CD4-positive, alpha-beta memory T cell (primary cell): ENCODE measurements at regions of chr11 and their contacts with region 1.

Region 1: GRCh38 chr11:117817368-117818040 is 7.0 kb downstream of the FXYD2 start:
- DNase-seq: peak; percentile 75 to 82 (median 79)
- H3K4me3 ChIP-seq: no peak overlapping the region
- H3K4me3 Mint-ChIP-seq: peak overlapping the region in 5 of 8 donors; percentile 43 to 74 (median 61)
- H3K27ac ChIP-seq: peak overlapping the region; percentile 74
- H3K27ac Mint-ChIP-seq: peak overlapping the region; percentile 80 to 94 (median 93)
- H3K4me1 ChIP-seq: peaks cover 52% of the 10 kb centered on the region
- H3K4me1 Mint-ChIP-seq: peaks cover 26 to 69% (median 45%) of the 10 kb centered on the region in 4 donors
- H3K27me3 ChIP-seq: no peaks in the 10 kb centered on the region
- H3K27me3 Mint-ChIP-seq: no peaks in the 10 kb centered on the region

Region 2: GRCh38 chr11:117426269-117426685 is 391.2 kb before region 1 on chr11:
- CTCF ChIA-PET with region 1: interaction called, 51 read pairs
- POLR2A ChIA-PET with region 1: no interaction called
- intact Hi-C with region 1: loop called (anchors 1 kb)
- DNase-seq: peak in 4 of 5 donors; percentile 42 to 59 (median 52)
- H3K4me3 ChIP-seq: no peak overlapping the region
- H3K4me3 Mint-ChIP-seq: peak overlapping the region in 4 of 8 donors; percentile 6 to 60 (median 36)
- H3K27ac ChIP-seq: no peak overlapping the region
- H3K27ac Mint-ChIP-seq: no peak overlapping the region
- H3K4me1 ChIP-seq: peaks cover 6% of the 10 kb centered on the region
- H3K4me1 Mint-ChIP-seq: peaks cover 0 to 13% (median under 1%) of the 10 kb centered on the region in 4 donors
- H3K27me3 ChIP-seq: no peaks in the 10 kb centered on the region
- H3K27me3 Mint-ChIP-seq: peaks cover 0 to 1% of the 10 kb centered on the region in 2 donors

Region 3: GRCh38 chr11:117570701-117571100 is 246.8 kb before region 1 on chr11:
- CTCF ChIA-PET with region 1: no interaction called
- POLR2A ChIA-PET with region 1: no interaction called
- intact Hi-C with region 1: no loop called
- DNase-seq: no peak
- H3K4me3 ChIP-seq: no peak overlapping the region
- H3K4me3 Mint-ChIP-seq: no peak overlapping the region
- H3K27ac ChIP-seq: no peak overlapping the region
- H3K27ac Mint-ChIP-seq: no peak overlapping the region
- H3K4me1 ChIP-seq: no peaks in the 10 kb centered on the region
- H3K4me1 Mint-ChIP-seq: no peaks in the 10 kb centered on the region
- H3K27me3 ChIP-seq: no peaks in the 10 kb centered on the region
- H3K27me3 Mint-ChIP-seq: peaks cover 0 to 8% of the 10 kb centered on the region in 2 donors

Region 4: DNA sequence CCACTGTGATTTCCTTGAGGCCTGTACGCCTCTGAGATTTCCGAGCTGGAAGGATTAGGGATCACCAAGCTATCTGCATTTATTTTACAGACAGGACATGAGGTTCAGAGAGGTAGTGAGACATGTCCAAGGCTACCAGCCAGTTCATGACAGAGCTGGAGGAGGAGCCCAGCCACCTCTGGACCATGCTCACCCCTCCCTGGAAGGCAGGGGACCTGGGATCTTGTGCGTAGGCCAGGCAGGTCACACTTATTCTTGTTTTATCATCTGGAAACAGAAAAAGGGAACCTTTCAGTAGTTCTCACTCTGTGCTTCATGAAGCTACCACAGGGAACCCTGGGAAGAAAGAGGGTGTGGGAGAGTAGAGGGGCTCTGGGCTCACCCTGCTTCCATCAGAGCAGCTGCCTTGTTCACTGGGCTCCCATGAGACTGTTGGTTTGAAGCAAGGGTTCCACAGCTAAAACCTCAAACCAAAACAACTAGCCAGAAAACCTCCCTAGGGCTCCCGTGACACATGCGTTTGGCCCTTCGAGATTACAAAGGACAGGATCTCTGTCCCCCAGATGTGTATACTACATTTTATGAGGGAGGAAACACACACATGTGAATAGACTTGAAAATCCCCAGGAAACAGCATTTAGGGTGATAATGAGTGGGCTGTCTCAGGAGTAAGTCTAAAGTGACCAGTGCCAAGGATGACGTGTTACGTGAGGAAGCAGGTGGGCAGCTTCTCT is 126.9 kb before region 1 on chr11:
- CTCF ChIA-PET with region 1: no interaction called
- POLR2A ChIA-PET with region 1: no interaction called
- intact Hi-C with region 1: no loop called
- DNase-seq: no peak
- H3K4me3 ChIP-seq: no peak overlapping the region
- H3K4me3 Mint-ChIP-seq: no peak overlapping the region
- H3K27ac ChIP-seq: no peak overlapping the region
- H3K27ac Mint-ChIP-seq: no peak overlapping the region
- H3K4me1 ChIP-seq: no peaks in the 10 kb centered on the region
- H3K4me1 Mint-ChIP-seq: no peaks in the 10 kb centered on the region
- H3K27me3 ChIP-seq: no peaks in the 10 kb centered on the region
- H3K27me3 Mint-ChIP-seq: peaks cover 3 to 11% of the 10 kb centered on the region in 2 donors

Region 5: GRCh38 chr11:117828611-117829368 is 11.3 kb after region 1 on chr11:
- CTCF ChIA-PET with region 1: interaction called, 59 read pairs
- POLR2A ChIA-PET with region 1: interaction called, 70 read pairs
- intact Hi-C with region 1: loop called (anchors 1 kb)
- DNase-seq: peak; percentile 49 to 91 (median 59)
- H3K4me3 ChIP-seq: no peak overlapping the region
- H3K4me3 Mint-ChIP-seq: peak overlapping the region in 4 of 8 donors; percentile 24 to 65 (median 44)
- H3K27ac ChIP-seq: peak overlapping the region; percentile 44
- H3K27ac Mint-ChIP-seq: peak overlapping the region; percentile 65 to 87 (median 79)
- H3K4me1 ChIP-seq: peaks cover 40% of the 10 kb centered on the region
- H3K4me1 Mint-ChIP-seq: peaks cover 19 to 69% (median 40%) of the 10 kb centered on the region in 4 donors
- H3K27me3 ChIP-seq: no peaks in the 10 kb centered on the region
- H3K27me3 Mint-ChIP-seq: no peaks in the 10 kb centered on the region

Region 6: GRCh38 chr11:117861151-117862018 is 43.9 kb after region 1 on chr11:
- CTCF ChIA-PET with region 1: no interaction called
- POLR2A ChIA-PET with region 1: no interaction called
- intact Hi-C with region 1: no loop called
- DNase-seq: no peak
- H3K4me3 ChIP-seq: no peak overlapping the region
- H3K4me3 Mint-ChIP-seq: no peak overlapping the region
- H3K27ac ChIP-seq: no peak overlapping the region
- H3K27ac Mint-ChIP-seq: no peak overlapping the region
- H3K4me1 ChIP-seq: no peaks in the 10 kb centered on the region
- H3K4me1 Mint-ChIP-seq: peaks cover 0 to 3% (median 0%) of the 10 kb centered on the region in 4 donors
- H3K27me3 ChIP-seq: no peaks in the 10 kb centered on the region
- H3K27me3 Mint-ChIP-seq: peaks cover 5 to 8% of the 10 kb centered on the region in 2 donors

Region 7: GRCh38 chr11:117953024-117953671 is 135.6 kb after region 1 on chr11:
- CTCF ChIA-PET with region 1: interaction called, 216 read pairs
- POLR2A ChIA-PET with region 1: interaction called, 21 read pairs
- intact Hi-C with region 1: no loop called
- DNase-seq: peak; percentile 65 to 74 (median 68)
- H3K4me3 ChIP-seq: peak overlapping the region in 1 of 2 donors; percentile 50
- H3K4me3 Mint-ChIP-seq: peak overlapping the region; percentile 29 to 89 (median 81)
- H3K27ac ChIP-seq: peak overlapping the region; percentile 48
- H3K27ac Mint-ChIP-seq: peak overlapping the region; percentile 88 to 97 (median 94)
- H3K4me1 ChIP-seq: peaks cover 81% of the 10 kb centered on the region
- H3K4me1 Mint-ChIP-seq: peaks cover 61 to 93% (median 75%) of the 10 kb centered on the region in 4 donors
- H3K27me3 ChIP-seq: no peaks in the 10 kb centered on the region
- H3K27me3 Mint-ChIP-seq: no peaks in the 10 kb centered on the region

Region 8: GRCh38 chr11:118046051-118046963 is 228.8 kb after region 1 on chr11:
- CTCF ChIA-PET with region 1: interaction called, 81 read pairs
- POLR2A ChIA-PET with region 1: interaction called, 39 read pairs
- intact Hi-C with region 1: no loop called
- DNase-seq: peak; percentile 66 to 83 (median 72)
- H3K4me3 ChIP-seq: peak overlapping the region in 1 of 2 donors; percentile 15
- H3K4me3 Mint-ChIP-seq: peak overlapping the region in 7 of 8 donors; percentile 17 to 82 (median 57)
- H3K27ac ChIP-seq: peak overlapping the region; percentile 75
- H3K27ac Mint-ChIP-seq: peak overlapping the region; percentile 81 to 99 (median 94)
- H3K4me1 ChIP-seq: peaks cover 99% of the 10 kb centered on the region
- H3K4me1 Mint-ChIP-seq: peaks cover 68 to 96% (median 85%) of the 10 kb centered on the region in 4 donors
- H3K27me3 ChIP-seq: no peaks in the 10 kb centered on the region
- H3K27me3 Mint-ChIP-seq: no peaks in the 10 kb centered on the region